CD8-positive, alpha-beta T cell (primary cell): ENCODE measurements at regions of chr6 and their contacts with region 1.

Region 1: DNA sequence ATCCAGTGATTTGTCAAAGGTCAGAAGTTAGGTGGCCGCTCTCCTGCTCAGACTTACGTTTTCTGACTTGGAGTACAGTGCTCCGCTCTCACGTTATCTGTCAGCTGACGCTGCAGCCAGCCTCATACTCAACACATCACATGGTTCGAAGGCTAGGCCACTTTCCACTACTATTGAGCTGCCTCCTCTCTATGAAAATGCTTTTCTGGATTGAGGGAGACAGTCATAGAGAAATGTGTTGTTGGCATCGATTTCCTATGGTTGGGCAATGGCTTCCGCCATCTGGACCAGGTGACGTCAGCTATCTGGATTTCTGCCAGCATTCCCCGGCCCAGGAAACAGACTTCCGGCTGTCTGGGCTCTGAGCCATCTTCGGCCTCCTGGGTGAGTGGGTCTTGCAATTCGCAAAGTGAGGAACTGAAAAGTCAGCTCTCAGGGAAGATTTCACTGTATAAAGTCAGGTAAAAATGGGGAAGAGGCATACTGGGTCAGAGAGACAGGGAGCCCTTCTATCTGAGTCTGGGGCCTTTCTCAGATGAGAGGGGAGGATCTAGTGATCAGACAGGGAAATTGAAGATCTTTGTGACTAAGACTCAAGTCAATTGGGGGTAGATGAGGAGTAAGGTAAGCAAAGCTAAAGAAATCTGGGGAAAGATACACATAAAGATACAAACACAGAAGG is 37.5 kb upstream of the IER3 start:
- DNase-seq: peak in 4 of 9 experiments; percentile 18 to 56 (median 29)
- ATAC-seq: no peak
- H3K4me3 ChIP-seq: no peak overlapping the region
- H3K4me3 Mint-ChIP-seq: no peak overlapping the region
- H3K27ac ChIP-seq: no peak overlapping the region
- H3K27ac Mint-ChIP-seq: no peak overlapping the region
- H3K4me1 ChIP-seq: peaks cover 18% of the 10 kb centered on the region
- H3K4me1 Mint-ChIP-seq: peaks cover 43% of the 10 kb centered on the region
- H3K27me3 ChIP-seq: no peaks in the 10 kb centered on the region
- H3K27me3 Mint-ChIP-seq: no peaks in the 10 kb centered on the region
- CTCF ChIP-seq: no peak

Region 2: DNA sequence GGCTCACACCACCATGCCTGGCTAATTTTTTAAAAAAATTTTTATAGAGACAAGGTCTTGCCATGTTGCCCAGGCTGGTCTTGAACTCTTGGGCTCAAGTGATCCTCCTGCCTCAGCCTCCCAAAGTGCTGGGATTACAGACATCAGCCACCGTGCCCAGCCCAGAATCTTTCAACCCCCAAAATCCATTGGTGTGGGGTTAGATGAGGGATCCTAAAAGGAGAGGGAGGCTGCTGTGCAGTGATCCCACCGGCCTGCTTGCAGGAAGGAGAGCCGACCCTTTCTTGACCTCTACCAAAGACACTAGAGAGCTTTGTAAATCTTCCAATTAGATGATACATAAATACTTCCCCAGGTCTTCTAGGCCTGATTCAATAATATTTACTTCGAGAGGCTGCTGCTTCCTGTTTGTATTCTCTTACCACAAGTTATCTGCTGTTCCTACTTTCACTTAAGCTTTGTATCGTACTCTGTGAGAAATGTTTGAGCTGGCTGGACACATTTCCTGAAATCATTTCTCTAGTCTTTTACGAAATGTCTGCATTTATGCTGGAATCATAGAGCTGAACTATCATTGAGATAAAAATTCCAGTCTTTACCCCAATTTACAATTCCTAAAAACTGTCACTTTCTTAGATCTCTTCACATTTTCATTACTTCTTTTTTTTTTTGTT is 11.8 kb after region 1 on chr6:
- CTCF ChIA-PET with region 1: interaction called, 4 read pairs
- POLR2A ChIA-PET with region 1: interaction called, 5 read pairs
- intact Hi-C with region 1: loop called in 1 of 2 experiments (anchors 1 kb)
- DNase-seq: peak in 3 of 9 experiments; percentile 53 to 74 (median 64)
- ATAC-seq: peak; percentile 82
- H3K4me3 ChIP-seq: peak overlapping the region; percentile 21 to 28
- H3K4me3 Mint-ChIP-seq: peak overlapping the region; percentile 78
- H3K27ac ChIP-seq: peak overlapping the region; percentile 60 to 90
- H3K27ac Mint-ChIP-seq: peak overlapping the region; percentile 98
- H3K4me1 ChIP-seq: peaks cover 30% of the 10 kb centered on the region
- H3K4me1 Mint-ChIP-seq: peaks cover 55% of the 10 kb centered on the region
- H3K27me3 ChIP-seq: no peaks in the 10 kb centered on the region
- H3K27me3 Mint-ChIP-seq: no peaks in the 10 kb centered on the region
- CTCF ChIP-seq: no peak